KBM-7 (cell line): ENCODE measurements at regions of chr10 and their contacts with region 1.

Region 1: DNA sequence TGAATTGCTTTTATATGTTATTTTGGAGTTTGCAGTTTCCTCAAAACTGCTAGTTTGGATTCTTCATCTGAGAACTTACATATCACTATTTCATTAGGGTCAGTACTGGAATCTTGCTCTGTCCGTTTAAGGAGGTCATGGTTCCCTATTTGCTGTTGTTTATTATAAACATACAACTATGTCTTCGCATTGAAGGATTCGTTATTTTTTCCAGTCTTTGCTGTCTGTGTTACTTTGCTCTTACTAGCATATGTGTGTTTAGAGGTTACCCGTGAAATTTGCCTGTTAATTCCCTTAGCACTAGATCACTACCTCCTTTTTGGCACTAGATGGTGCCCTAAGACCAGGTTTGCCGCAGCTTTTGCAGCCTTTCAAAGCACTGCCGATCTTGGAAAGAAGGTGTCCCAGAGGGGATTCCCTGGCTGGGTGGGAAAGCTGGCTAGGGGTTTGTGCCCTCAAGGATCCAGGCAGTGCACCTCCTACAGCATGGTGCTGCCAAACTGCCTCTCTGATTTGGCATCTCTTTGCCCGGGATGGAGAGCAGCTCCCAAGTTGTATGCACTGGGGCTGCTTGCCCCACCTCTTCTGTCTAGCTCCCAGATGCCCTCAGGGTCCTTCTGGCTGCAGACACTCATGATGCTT is 103.1 kb upstream of the APBB1IP start:
- DNase-seq: peak; percentile 86

Region 2: DNA sequence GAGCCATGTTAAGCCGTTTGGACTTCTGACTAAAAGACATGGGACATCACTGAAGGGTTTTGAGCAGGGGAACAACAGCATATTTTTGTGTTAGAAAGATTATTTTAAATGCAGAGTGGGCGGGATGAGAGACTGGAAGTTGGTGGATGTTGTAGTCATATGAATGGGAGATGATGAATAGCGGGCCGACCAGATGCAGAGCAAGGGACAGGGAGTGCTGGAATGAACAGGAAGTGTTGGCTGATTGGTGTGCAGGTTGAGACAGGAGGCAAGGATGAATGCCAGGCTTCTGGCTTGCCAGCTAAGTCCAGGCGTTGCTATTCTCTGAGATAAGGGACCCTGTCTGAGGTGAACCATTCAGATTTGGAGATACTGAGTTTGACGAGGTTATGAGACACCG is 80.4 kb before region 1 on chr10:
- in situ Hi-C with region 1: no loop called
- DNase-seq: no peak

Region 3: DNA sequence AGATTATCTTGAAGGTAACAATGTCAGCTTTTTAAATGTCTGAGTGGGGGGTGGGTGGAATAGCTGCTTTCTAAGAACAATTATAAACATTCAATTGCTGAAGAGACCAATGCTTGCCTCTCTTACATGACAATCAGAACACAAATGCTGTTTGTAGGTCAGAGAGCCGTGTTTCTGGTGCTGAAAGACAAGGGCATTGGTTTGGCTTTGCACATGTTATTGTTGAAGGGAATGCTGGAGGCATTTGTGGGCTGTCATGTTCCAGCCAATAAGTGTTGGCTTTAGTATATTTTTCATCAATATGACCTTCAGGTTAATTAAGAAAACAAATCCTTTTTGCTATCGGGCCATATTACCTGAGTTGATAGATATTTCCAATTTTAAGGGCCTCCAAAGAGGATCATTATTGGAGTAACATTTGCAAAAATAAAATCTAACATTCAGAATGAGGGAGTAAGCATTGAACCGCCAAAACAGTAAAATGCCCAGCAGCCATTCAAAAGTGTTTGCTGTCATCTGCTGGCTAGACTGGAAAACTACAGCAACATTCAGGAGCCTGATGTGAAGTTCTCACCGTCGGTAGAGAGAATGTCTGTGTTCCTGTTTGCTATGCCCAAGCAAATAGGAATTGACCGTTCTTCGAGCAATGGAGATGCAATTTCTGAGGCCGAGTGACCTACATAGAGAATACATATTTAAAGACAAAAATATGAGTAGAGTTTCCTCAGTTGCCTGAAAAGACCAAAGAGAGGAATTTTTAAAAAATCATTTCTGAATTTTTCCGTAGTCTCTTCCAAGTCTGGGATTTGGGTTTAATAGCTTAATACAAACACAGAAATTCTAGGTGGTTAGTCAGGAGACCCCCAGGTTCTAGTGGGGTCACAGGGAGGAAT is 221.9 kb after region 1 on chr10:
- in situ Hi-C with region 1: loop called (anchors 25 kb)
- DNase-seq: peak; percentile 58